ENCODE measurements at regions of chr15 and their contacts with region 1.

Region 1: GRCh38 chr15:56052395-56053045 is 59.1 kb upstream of the NEDD4 start:
- DNase-seq: no peak
- H3K4me3 Mint-ChIP-seq: no peak overlapping the region
- H3K27ac Mint-ChIP-seq: no peak overlapping the region
- H3K4me1 Mint-ChIP-seq: no peaks in the 10 kb centered on the region
- H3K27me3 Mint-ChIP-seq: no peaks in the 10 kb centered on the region

Region 2: DNA sequence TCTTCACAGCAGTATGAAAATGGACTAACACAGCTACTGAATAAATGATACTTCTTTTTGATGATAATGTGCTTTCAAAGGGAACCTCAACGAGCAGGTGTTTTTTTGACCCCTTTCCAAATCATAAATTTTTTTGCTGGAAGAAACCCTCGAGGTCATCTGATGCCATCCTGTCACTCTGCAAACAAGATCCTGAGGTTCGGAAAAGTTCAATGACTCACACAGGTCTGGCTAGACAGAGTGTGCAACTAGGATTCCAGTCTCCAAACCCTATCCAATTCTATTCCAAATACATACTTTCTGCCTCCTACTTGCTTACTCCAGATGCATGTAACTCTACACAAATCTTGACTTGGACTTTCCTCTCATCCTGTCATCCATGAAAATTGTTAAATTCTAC is 183.8 kb before region 1 on chr15:
- intact Hi-C with region 1: loop called (anchors 10 kb)
- DNase-seq: no peak
- H3K4me3 Mint-ChIP-seq: no peak overlapping the region
- H3K27ac Mint-ChIP-seq: no peak overlapping the region
- H3K4me1 Mint-ChIP-seq: peaks cover 4% of the 10 kb centered on the region
- H3K27me3 Mint-ChIP-seq: peaks cover 2% of the 10 kb centered on the region

Region 3: GRCh38 chr15:56064152-56064551 is 11.6 kb after region 1 on chr15:
- intact Hi-C with region 1: no loop called
- DNase-seq: no peak
- H3K4me3 Mint-ChIP-seq: no peak overlapping the region
- H3K27ac Mint-ChIP-seq: no peak overlapping the region
- H3K4me1 Mint-ChIP-seq: no peaks in the 10 kb centered on the region
- H3K27me3 Mint-ChIP-seq: peaks cover 11% of the 10 kb centered on the region

Region 4: GRCh38 chr15:56086566-56086965 is 34.0 kb after region 1 on chr15:
- intact Hi-C with region 1: no loop called
- DNase-seq: no peak
- H3K4me3 Mint-ChIP-seq: no peak overlapping the region
- H3K27ac Mint-ChIP-seq: no peak overlapping the region
- H3K4me1 Mint-ChIP-seq: peaks cover 9% of the 10 kb centered on the region
- H3K27me3 Mint-ChIP-seq: no peaks in the 10 kb centered on the region

Measured in activated T-helper 2 cell treated with anti-CD3 and anti-CD28 coated beads, Interferon-gamma antibody, Interleukin-2, Interleukin-4, amounts not matched to agents 10 μg/mL and 5 μg/mL and 100 μg/mL, durations not matched to agents 14 hours and 24 hours and 36 hours (primary cell).